Mammary epithelial cell (primary cell): ENCODE measurements at regions of chr18 and their contacts with region 1.

Region 1: DNA sequence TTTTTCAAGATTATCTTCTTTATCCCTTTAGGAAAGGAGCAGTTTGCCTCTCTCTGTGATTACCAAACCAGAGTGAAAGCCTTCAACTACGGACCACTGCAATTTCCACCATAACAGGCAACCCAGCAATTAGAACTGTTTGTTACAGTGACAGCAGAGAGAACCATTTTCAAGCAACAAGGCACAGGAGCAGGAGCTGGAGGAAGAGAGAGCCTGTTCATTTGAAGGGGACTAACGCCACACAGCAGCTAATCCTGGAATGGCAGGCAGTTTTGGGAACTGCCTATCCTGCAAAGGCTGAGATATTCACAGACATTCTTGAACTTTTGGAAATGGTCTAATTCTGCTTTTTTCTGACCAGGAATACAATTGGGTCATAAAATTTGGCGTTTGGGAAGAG is 1541.9 kb upstream of the PIK3C3 start:
- DNase-seq: no peak
- H3K4me3 ChIP-seq: no peak overlapping the region
- H3K27ac ChIP-seq: no peak overlapping the region
- H3K4me1 ChIP-seq: no peaks in the 10 kb centered on the region
- H3K27me3 ChIP-seq: no peaks in the 10 kb centered on the region
- CTCF ChIP-seq: peak; percentile 71 to 74

Region 2: GRCh38 chr18:39571511-39571910 is 841.6 kb before region 1 on chr18:
- CTCF ChIA-PET with region 1: no interaction called
- dilution Hi-C with region 1: no loop called
- in situ Hi-C with region 1: no loop called
- intact Hi-C with region 1: loop called (anchors 5 kb)
- DNase-seq: no peak
- H3K4me3 ChIP-seq: no peak overlapping the region
- H3K27ac ChIP-seq: no peak overlapping the region
- H3K4me1 ChIP-seq: no peaks in the 10 kb centered on the region
- H3K27me3 ChIP-seq: no peaks in the 10 kb centered on the region
- CTCF ChIP-seq: peak; percentile 12 to 47

Region 3: DNA sequence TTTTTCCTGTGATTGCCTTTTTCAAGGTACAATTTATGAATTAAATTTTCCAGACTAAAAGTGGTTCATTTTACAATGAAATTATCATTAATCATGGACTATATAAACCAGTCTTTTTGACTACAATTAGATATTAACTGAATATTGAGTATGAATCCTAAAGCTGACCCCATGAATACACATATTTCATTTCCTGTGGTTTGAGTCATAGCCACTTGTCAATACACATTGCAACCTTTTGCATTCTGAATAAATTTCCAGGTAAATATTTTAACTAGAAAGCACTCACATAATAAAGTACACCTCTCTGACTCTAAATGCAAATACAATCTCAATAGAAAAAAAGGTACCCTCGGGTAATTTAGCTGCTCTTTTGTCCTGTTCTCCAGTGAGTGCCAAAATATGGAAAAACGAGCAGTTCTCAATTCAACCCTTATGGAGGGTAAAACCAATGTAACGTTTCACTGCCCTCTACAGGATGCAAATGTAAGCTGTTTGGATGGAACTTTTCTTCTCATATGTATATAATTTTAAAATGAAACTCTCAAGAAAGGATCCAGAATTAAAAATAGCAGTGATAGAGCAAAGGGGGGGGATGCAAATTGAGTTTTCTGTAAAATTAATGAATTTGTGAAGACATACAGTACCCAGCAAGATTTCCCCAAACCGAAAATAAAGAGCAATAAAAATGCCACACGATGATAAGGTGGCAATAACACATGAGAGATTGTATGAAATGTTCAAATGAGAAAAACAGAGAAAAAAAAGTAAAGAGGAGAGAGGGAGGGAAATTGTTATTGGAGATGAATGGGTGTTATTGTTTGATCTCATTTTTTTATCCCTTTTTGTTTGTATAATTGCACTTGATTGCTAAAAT is 253.8 kb before region 1 on chr18:
- CTCF ChIA-PET with region 1: no interaction called
- dilution Hi-C with region 1: no loop called
- in situ Hi-C with region 1: no loop called
- intact Hi-C with region 1: loop called (anchors 5 kb)
- DNase-seq: peak; percentile 34
- H3K4me3 ChIP-seq: no peak overlapping the region
- H3K27ac ChIP-seq: no peak overlapping the region
- H3K4me1 ChIP-seq: no peaks in the 10 kb centered on the region
- H3K27me3 ChIP-seq: no peaks in the 10 kb centered on the region
- CTCF ChIP-seq: peak; percentile 75

Region 4: GRCh38 chr18:40355726-40356125 is 57.4 kb before region 1 on chr18:
- CTCF ChIA-PET with region 1: no interaction called
- dilution Hi-C with region 1: no loop called
- in situ Hi-C with region 1: no loop called
- intact Hi-C with region 1: no loop called
- DNase-seq: peak; percentile 50
- H3K4me3 ChIP-seq: no peak overlapping the region
- H3K27ac ChIP-seq: no peak overlapping the region
- H3K4me1 ChIP-seq: no peaks in the 10 kb centered on the region
- H3K27me3 ChIP-seq: no peaks in the 10 kb centered on the region
- CTCF ChIP-seq: no peak

Region 5: DNA sequence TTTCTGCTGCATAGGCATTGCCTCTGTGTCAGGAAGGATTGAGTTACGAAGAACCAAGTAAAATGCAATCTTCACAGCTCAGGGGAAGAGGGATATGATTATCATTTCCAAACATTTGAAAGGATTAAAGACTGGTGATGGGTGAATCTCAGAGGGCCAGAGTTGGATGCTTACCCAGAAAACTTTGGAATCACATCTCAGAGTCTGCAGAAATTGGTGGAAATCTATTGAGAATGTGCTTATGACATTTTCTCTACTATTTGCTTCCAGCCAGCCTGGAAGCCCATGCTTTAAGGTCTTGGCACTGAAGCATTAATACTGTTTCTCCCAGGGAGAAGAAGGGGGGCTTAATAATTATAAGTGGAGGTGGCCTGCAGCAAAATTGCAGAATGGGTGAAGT is 240.5 kb after region 1 on chr18:
- CTCF ChIA-PET with region 1: no interaction called
- dilution Hi-C with region 1: no loop called
- in situ Hi-C with region 1: no loop called
- intact Hi-C with region 1: no loop called
- DNase-seq: no peak
- H3K4me3 ChIP-seq: no peak overlapping the region
- H3K27ac ChIP-seq: no peak overlapping the region
- H3K4me1 ChIP-seq: no peaks in the 10 kb centered on the region
- H3K27me3 ChIP-seq: no peaks in the 10 kb centered on the region
- CTCF ChIP-seq: no peak

Region 6: GRCh38 chr18:40868110-40868858 is 455.1 kb after region 1 on chr18:
- CTCF ChIA-PET with region 1: no interaction called
- dilution Hi-C with region 1: no loop called
- in situ Hi-C with region 1: no loop called
- intact Hi-C with region 1: loop called (anchors 2 kb)
- DNase-seq: peak; percentile 99
- H3K4me3 ChIP-seq: no peak overlapping the region
- H3K27ac ChIP-seq: peak overlapping the region; percentile 100
- H3K4me1 ChIP-seq: peaks cover 27% of the 10 kb centered on the region
- H3K27me3 ChIP-seq: no peaks in the 10 kb centered on the region
- CTCF ChIP-seq: no peak

Region 7: DNA sequence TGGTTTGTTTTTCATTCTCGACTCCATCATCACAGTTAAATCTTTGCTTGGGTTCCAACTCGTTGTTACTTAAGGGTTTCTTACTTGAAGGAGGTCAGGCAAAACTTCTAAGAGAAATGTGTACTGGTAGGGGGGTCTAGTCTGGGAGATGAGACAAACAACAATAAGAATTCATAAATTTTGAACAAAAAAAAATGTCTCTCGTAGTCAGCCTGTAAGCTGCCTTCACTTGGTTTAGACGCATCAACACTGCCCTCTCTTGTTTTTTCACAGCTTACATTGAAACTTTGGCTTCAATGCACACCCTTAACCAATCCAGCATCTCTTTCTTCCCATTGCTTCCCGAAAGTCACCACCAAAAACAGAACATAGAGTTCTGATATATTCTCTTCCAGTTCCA is 965.4 kb after region 1 on chr18:
- CTCF ChIA-PET with region 1: no interaction called
- dilution Hi-C with region 1: no loop called
- in situ Hi-C with region 1: loop called in 1 of 2 experiments (anchors 25 kb)
- intact Hi-C with region 1: loop called (anchors 5 kb)
- DNase-seq: peak; percentile 39
- H3K4me3 ChIP-seq: no peak overlapping the region
- H3K27ac ChIP-seq: no peak overlapping the region
- H3K4me1 ChIP-seq: no peaks in the 10 kb centered on the region
- H3K27me3 ChIP-seq: no peaks in the 10 kb centered on the region
- CTCF ChIP-seq: peak; percentile 45 to 61

Region 8: GRCh38 chr18:41745166-41746049 is 1332.2 kb after region 1 on chr18:
- CTCF ChIA-PET with region 1: no interaction called
- dilution Hi-C with region 1: no loop called
- in situ Hi-C with region 1: no loop called
- intact Hi-C with region 1: loop called (anchors 10 kb)
- DNase-seq: peak; percentile 28
- H3K4me3 ChIP-seq: no peak overlapping the region
- H3K27ac ChIP-seq: no peak overlapping the region
- H3K4me1 ChIP-seq: no peaks in the 10 kb centered on the region
- H3K27me3 ChIP-seq: no peaks in the 10 kb centered on the region
- CTCF ChIP-seq: peak; percentile 64 to 87